ENCODE measurements at regions of chr20 and their contacts with region 1.

Region 1: GRCh38 chr20:48620519-48621254 is 207.1 kb downstream of the PREX1 start:
- DNase-seq: peak; percentile 84 to 91 (median 86)
- ATAC-seq: peak; percentile 88 to 95 (median 94)
- H3K4me3 ChIP-seq: peak overlapping the region in 9 of 12 donors; percentile 1 to 55 (median 37)
- H3K27ac ChIP-seq: no peak overlapping the region
- H3K4me1 ChIP-seq: peaks cover 0 to 27% (median 15%) of the 10 kb centered on the region in 12 donors
- H3K27me3 ChIP-seq: no peaks in the 10 kb centered on the region
- CTCF ChIP-seq: peak in 11 of 12 donors; percentile 74 to 90 (median 81)
- POLR2A ChIP-seq: no peak

Region 2: DNA sequence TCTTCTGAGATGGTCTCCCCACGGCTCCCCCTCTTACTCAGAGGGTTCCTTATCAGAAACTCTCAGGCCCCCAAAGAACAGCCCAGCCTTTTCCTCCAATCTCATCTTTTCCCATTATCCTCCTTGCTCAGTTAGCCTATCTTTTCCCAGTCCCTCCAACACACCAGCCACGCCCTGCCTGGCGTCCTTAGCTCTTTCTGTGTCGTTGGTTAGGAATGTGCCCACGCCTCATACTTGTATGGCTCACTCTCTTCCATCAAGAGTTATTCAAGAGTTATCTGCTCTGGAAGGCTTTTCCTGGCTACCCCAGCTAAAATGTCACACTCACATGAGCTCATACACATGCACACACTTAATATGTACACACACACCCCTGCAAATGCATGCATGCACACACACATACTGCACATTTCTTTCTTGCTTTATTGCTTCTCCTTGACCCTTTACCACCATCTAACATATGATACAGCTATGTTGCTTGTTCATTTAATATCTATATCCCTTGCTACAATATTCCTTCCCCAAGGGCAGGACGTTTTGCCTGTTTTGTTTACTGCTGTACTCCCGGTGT is 1873.6 kb before region 1 on chr20:
- intact Hi-C with region 1: loop called in 3 of 10 experiments (anchors 5 to 10 kb)
- DNase-seq: no peak
- ATAC-seq: peak in 1 of 4 donors; percentile 31
- H3K4me3 ChIP-seq: no peak overlapping the region
- H3K27ac ChIP-seq: no peak overlapping the region
- H3K4me1 ChIP-seq: no peaks in the 10 kb centered on the region
- H3K27me3 ChIP-seq: peaks cover 0 to 41% (median 4%) of the 10 kb centered on the region in 9 donors
- CTCF ChIP-seq: no peak
- POLR2A ChIP-seq: no peak

Region 3: GRCh38 chr20:47663333-47664067 is 957.2 kb before region 1 on chr20:
- intact Hi-C with region 1: loop called in 9 of 10 experiments (anchors 1 to 5 kb)
- DNase-seq: peak; percentile 69 to 87 (median 79)
- ATAC-seq: peak; percentile 70 to 90 (median 79)
- H3K4me3 ChIP-seq: no peak overlapping the region
- H3K27ac ChIP-seq: no peak overlapping the region
- H3K4me1 ChIP-seq: peaks cover 0 to 19% (median 9%) of the 10 kb centered on the region in 12 donors
- H3K27me3 ChIP-seq: no peaks in the 10 kb centered on the region
- CTCF ChIP-seq: peak; percentile 92 to 99 (median 98)
- POLR2A ChIP-seq: no peak

Region 4: GRCh38 chr20:47725248-47725973 is 895.3 kb before region 1 on chr20:
- intact Hi-C with region 1: loop called in 9 of 10 experiments (anchors 1 to 5 kb)
- DNase-seq: peak; percentile 71 to 79 (median 77)
- ATAC-seq: peak in 3 of 4 donors; percentile 60 to 64 (median 61)
- H3K4me3 ChIP-seq: no peak overlapping the region
- H3K27ac ChIP-seq: no peak overlapping the region
- H3K4me1 ChIP-seq: peaks cover 0 to 26% (median 6%) of the 10 kb centered on the region in 12 donors
- H3K27me3 ChIP-seq: no peaks in the 10 kb centered on the region
- CTCF ChIP-seq: peak; percentile 77 to 91 (median 86)
- POLR2A ChIP-seq: no peak

Region 5: DNA sequence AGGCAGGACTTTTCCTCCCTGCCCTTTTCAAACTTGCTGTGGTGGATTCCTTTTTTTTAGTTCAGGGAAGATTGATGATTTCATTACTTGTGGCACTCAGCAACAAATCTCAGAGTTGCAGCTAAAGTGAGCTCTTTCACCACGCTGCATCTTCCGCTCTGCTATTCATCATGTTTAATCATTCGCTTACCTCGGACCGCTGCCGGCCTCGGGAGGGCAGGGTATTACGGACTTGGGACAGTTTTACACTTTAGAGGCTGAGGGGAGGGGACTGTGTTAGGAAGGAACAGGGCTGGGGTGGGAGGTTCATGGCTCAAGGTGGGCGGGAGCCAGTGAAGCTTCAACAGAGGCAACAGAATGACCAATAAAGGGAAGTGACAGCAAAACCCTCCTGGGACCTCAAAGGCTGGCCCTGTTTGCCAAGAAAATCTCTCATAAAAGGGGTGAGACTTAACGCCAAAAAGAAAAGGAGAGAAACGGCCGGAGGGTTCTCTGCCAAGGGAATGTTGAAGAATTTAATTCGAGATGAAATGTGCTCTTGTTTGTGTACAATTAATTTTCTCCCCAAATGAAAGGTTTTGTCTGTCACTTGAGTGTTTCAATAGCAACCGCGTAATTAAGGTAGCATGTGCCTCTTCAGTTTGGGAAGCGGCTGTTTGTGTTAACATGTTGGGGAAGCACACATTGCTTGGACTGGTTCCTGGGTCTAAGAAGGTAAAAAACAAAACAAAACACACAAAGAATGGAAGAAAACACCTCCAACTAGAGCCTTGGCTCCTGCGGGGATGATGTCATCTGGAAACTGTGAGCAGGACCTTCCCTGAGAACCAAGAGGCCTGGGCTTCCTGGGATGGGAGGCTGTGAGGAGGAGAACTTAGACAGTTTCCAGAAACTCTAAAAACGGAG is 762.9 kb before region 1 on chr20:
- intact Hi-C with region 1: loop called in 1 of 10 experiments (anchors 5 kb)
- DNase-seq: peak in 4 of 5 donors; percentile 44 to 53 (median 50)
- ATAC-seq: peak in 3 of 4 donors; percentile 73 to 87 (median 74)
- H3K4me3 ChIP-seq: no peak overlapping the region
- H3K27ac ChIP-seq: peak overlapping the region in 9 of 12 donors; percentile 4 to 69 (median 62)
- H3K4me1 ChIP-seq: peaks cover 0 to 19% (median 8%) of the 10 kb centered on the region in 12 donors
- H3K27me3 ChIP-seq: peaks cover 0 to 8% (median 0%) of the 10 kb centered on the region in 9 donors
- CTCF ChIP-seq: no peak
- POLR2A ChIP-seq: no peak

Region 6: GRCh38 chr20:48635433-48636310 is 15.0 kb after region 1 on chr20:
- intact Hi-C with region 1: no loop called
- DNase-seq: peak; percentile 37 to 79 (median 48)
- ATAC-seq: peak; percentile 33 to 77 (median 58)
- H3K4me3 ChIP-seq: no peak overlapping the region
- H3K27ac ChIP-seq: no peak overlapping the region
- H3K4me1 ChIP-seq: no peaks in the 10 kb centered on the region
- H3K27me3 ChIP-seq: no peaks in the 10 kb centered on the region
- CTCF ChIP-seq: peak; percentile 57 to 85 (median 72)
- POLR2A ChIP-seq: no peak